Common myeloid progenitor, CD34-positive (primary cell): ENCODE measurements at regions of chr4 and their contacts with region 1.

Region 1: DNA sequence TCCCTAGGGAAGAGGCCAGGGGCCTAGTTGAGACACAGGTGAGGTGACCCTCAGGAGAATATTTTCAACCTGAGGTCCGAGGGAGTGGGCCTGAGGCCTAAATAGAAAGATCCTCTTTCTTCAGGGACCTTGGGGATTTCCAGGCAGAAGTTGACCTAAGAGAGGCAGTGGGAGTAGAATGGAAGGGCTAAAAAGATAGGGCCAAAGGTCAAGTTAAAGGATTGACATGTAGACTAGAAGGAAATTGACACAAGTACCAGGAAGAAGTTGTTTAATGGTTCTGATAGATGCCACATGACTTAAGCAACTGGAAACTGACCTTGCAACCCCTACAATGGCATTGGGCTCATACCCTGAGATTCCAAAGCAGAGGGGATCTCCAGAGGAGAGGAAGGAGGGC is 76.9 kb downstream of the SHROOM3 start:
- DNase-seq: no peak
- H3K4me3 ChIP-seq: no peak overlapping the region
- H3K27ac ChIP-seq: no peak overlapping the region
- H3K4me1 ChIP-seq: peaks cover 0 to 10% (median 0%) of the 10 kb centered on the region in 4 experiments
- H3K27me3 ChIP-seq: no peaks in the 10 kb centered on the region

Region 2: GRCh38 chr4:77044461-77045150 is 532.7 kb after region 1 on chr4:
- CTCF ChIA-PET with region 1: interaction called, 20 read pairs
- POLR2A ChIA-PET with region 1: no interaction called
- DNase-seq: peak; percentile 38 to 69 (median 61)
- H3K4me3 ChIP-seq: no peak overlapping the region
- H3K27ac ChIP-seq: no peak overlapping the region
- H3K4me1 ChIP-seq: peaks cover 0 to 5% (median 2%) of the 10 kb centered on the region in 4 experiments
- H3K27me3 ChIP-seq: no peaks in the 10 kb centered on the region